ENCODE measurements at regions of chr12 and their contacts with region 1.

Region 1: GRCh38 chr12:15532364-15532977 is 210.2 kb downstream of the PTPRO start:
- DNase-seq: peak; percentile 67
- ATAC-seq: peak; percentile 70
- H3K4me3 Mint-ChIP-seq: no peak overlapping the region
- H3K27ac Mint-ChIP-seq: no peak overlapping the region
- H3K4me1 Mint-ChIP-seq: peaks cover 10% of the 10 kb centered on the region
- H3K27me3 Mint-ChIP-seq: peaks cover 14% of the 10 kb centered on the region

Region 2: GRCh38 chr12:15372352-15372751 is 160.1 kb before region 1 on chr12:
- CTCF ChIA-PET with region 1: no interaction called
- DNase-seq: no peak
- ATAC-seq: no peak
- H3K4me3 Mint-ChIP-seq: no peak overlapping the region
- H3K27ac Mint-ChIP-seq: no peak overlapping the region
- H3K4me1 Mint-ChIP-seq: no peaks in the 10 kb centered on the region
- H3K27me3 Mint-ChIP-seq: peaks cover 2% of the 10 kb centered on the region

Region 3: GRCh38 chr12:15494329-15495046 is 38.0 kb before region 1 on chr12:
- CTCF ChIA-PET with region 1: no interaction called
- DNase-seq: no peak
- ATAC-seq: no peak
- H3K4me3 Mint-ChIP-seq: no peak overlapping the region
- H3K27ac Mint-ChIP-seq: no peak overlapping the region
- H3K4me1 Mint-ChIP-seq: no peaks in the 10 kb centered on the region
- H3K27me3 Mint-ChIP-seq: peaks cover 32% of the 10 kb centered on the region

Region 4: GRCh38 chr12:15563663-15564062 is 31.2 kb after region 1 on chr12:
- CTCF ChIA-PET with region 1: interaction called, 13 read pairs
- DNase-seq: no peak
- ATAC-seq: peak; percentile 63
- H3K4me3 Mint-ChIP-seq: peak overlapping the region; percentile 63
- H3K27ac Mint-ChIP-seq: peak overlapping the region; percentile 83
- H3K4me1 Mint-ChIP-seq: peaks cover 51% of the 10 kb centered on the region
- H3K27me3 Mint-ChIP-seq: peaks cover 7% of the 10 kb centered on the region

Region 5: DNA sequence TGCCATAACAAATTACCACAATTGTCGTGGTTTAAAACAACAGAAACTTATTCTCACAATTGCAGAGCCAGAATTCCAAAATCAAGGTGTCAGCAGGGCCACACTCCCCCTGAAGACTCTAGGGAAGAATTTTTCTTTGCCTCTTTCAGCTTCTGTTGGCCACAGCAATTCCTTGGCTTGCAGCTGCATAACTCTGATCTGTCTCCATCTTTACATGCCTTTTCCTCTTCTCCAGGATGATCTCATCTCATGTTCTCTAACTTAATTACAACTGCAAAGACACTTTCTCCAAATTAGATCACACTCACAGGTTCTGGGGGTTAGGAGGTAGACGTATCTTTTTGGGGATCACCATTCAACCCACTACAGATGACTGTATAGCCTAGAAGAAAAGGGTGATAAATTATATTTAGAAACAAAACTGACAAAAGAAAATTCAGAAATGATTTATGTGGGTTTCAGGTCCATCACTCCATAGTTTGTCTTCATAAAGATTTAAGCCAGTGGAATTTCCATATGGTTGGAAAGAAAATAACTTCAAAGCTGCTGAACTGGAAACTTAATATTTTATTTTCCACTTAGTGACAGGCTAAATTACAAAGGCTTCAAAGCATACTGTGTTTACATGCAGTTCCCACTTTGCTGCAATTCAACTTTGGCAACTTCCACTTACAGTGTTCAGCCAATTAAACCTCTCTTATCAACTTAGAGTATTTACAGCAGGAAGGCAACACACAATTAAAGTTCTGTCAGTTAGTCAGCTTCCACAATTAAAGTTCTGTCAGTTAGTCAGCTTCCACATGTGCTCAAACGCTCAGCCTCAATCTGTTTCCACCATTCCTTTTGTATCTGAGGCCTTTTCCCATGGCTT is 43.4 kb after region 1 on chr12:
- CTCF ChIA-PET with region 1: interaction called, 312 read pairs
- DNase-seq: no peak
- ATAC-seq: no peak
- H3K4me3 Mint-ChIP-seq: no peak overlapping the region
- H3K27ac Mint-ChIP-seq: no peak overlapping the region
- H3K4me1 Mint-ChIP-seq: peaks cover 16% of the 10 kb centered on the region
- H3K27me3 Mint-ChIP-seq: peaks cover 6% of the 10 kb centered on the region

Region 6: GRCh38 chr12:15590180-15590826 is 57.8 kb after region 1 on chr12:
- CTCF ChIA-PET with region 1: interaction called, 312 read pairs
- DNase-seq: peak; percentile 60
- ATAC-seq: peak; percentile 92
- H3K4me3 Mint-ChIP-seq: peak overlapping the region; percentile 54
- H3K27ac Mint-ChIP-seq: peak overlapping the region; percentile 5
- H3K4me1 Mint-ChIP-seq: peaks cover 11% of the 10 kb centered on the region
- H3K27me3 Mint-ChIP-seq: peaks cover 39% of the 10 kb centered on the region

Region 7: GRCh38 chr12:15856097-15856982 is 323.9 kb after region 1 on chr12:
- CTCF ChIA-PET with region 1: interaction called, 19 read pairs
- DNase-seq: peak; percentile 56
- ATAC-seq: peak; percentile 42
- H3K4me3 Mint-ChIP-seq: no peak overlapping the region
- H3K27ac Mint-ChIP-seq: no peak overlapping the region
- H3K4me1 Mint-ChIP-seq: no peaks in the 10 kb centered on the region
- H3K27me3 Mint-ChIP-seq: peaks cover 39% of the 10 kb centered on the region